T-cell (primary cell): ENCODE measurements at regions of chr3 and their contacts with region 1.

Region 1: DNA sequence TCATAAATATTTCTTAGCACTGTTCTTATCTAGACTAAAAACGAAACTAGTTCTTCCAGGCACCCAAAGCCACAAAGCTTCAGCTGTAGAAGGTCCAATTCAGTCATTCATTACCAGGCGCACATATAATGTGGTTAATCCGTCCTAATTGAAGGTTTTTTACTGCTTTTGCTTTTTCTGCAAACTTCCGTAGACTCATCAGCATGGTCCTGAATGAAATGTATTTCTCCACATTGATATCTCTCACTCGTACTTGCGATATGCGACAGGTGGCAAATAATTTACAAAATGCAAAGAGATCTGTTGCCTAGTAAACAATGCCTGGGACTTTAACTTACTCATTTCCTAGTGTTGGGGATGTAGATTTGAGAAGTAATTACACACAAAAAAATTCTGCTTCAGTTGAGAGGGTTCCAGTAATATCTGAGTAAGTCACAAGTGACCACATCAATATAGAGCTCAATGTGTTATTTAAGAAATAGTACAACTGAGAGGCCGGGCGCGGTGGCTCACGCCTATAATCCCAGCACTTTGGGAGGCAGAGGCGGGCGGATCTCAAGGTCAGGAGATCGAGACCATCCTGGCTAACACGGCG is 75.0 kb upstream of the MBNL1 start:
- DNase-seq: peak in 12 of 35 experiments; percentile 11 to 74 (median 30)
- ATAC-seq: peak; percentile 62 to 70 (median 66)
- H3K4me3 ChIP-seq: peak overlapping the region; percentile 42 to 66
- H3K4me3 Mint-ChIP-seq: peak overlapping the region; percentile 71 to 83 (median 79)
- H3K27ac ChIP-seq: peak overlapping the region; percentile 70
- H3K27ac Mint-ChIP-seq: peak overlapping the region; percentile 90 to 98
- H3K4me1 ChIP-seq: peaks cover 33 to 41% of the 10 kb centered on the region in 2 experiments
- H3K4me1 Mint-ChIP-seq: peaks cover 81 to 91% (median 85%) of the 10 kb centered on the region in 3 donors
- H3K27me3 ChIP-seq: no peaks in the 10 kb centered on the region
- H3K27me3 Mint-ChIP-seq: no peaks in the 10 kb centered on the region

Region 2: GRCh38 chr3:151863611-151864010 is 330.2 kb before region 1 on chr3:
- CTCF ChIA-PET with region 1: no interaction called
- POLR2A ChIA-PET with region 1: no interaction called
- DNase-seq: no peak
- ATAC-seq: no peak
- H3K4me3 ChIP-seq: no peak overlapping the region
- H3K4me3 Mint-ChIP-seq: no peak overlapping the region
- H3K27ac ChIP-seq: no peak overlapping the region
- H3K27ac Mint-ChIP-seq: no peak overlapping the region
- H3K4me1 ChIP-seq: no peaks in the 10 kb centered on the region
- H3K4me1 Mint-ChIP-seq: no peaks in the 10 kb centered on the region
- H3K27me3 ChIP-seq: no peaks in the 10 kb centered on the region
- H3K27me3 Mint-ChIP-seq: no peaks in the 10 kb centered on the region

Region 3: GRCh38 chr3:151903501-151903991 is 290.2 kb before region 1 on chr3:
- CTCF ChIA-PET with region 1: no interaction called
- POLR2A ChIA-PET with region 1: no interaction called
- DNase-seq: no peak
- ATAC-seq: no peak
- H3K4me3 ChIP-seq: no peak overlapping the region
- H3K4me3 Mint-ChIP-seq: no peak overlapping the region
- H3K27ac ChIP-seq: no peak overlapping the region
- H3K27ac Mint-ChIP-seq: no peak overlapping the region
- H3K4me1 ChIP-seq: no peaks in the 10 kb centered on the region
- H3K4me1 Mint-ChIP-seq: peaks cover 17 to 23% (median 20%) of the 10 kb centered on the region in 3 donors
- H3K27me3 ChIP-seq: no peaks in the 10 kb centered on the region
- H3K27me3 Mint-ChIP-seq: peaks cover 0 to 5% of the 10 kb centered on the region in 2 donors

Region 4: DNA sequence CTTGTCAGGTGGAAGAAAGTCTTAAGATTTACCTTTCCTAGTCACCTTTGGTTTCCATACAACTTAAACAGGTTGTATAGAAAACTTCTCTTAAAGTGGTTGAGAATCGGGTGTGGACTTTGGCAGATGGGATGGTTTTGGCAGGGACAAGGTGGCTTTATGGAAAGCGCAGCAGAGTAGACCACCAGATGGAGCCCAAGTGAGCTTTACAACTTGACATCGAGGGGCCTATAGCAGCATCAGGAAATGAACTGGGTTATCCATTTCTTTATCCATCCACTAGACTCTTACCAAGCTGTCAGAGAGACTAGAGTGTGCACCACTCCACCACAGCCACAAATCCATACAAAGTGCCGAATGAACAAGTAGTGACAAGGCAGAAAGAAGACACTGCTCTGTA is 10.3 kb before region 1 on chr3:
- CTCF ChIA-PET with region 1: interaction called in 1 of 2 experiments, 12 read pairs
- POLR2A ChIA-PET with region 1: interaction called in 1 of 2 experiments, 3 read pairs
- DNase-seq: peak in 34 of 35 experiments; percentile 3 to 79 (median 46)
- ATAC-seq: peak; percentile 76 to 87 (median 81)
- H3K4me3 ChIP-seq: no peak overlapping the region
- H3K4me3 Mint-ChIP-seq: peak overlapping the region in 2 of 3 donors; percentile 22 to 32
- H3K27ac ChIP-seq: peak overlapping the region; percentile 7
- H3K27ac Mint-ChIP-seq: peak overlapping the region; percentile 59 to 80
- H3K4me1 ChIP-seq: peaks cover 4% of the 10 kb centered on the region in 2 experiments
- H3K4me1 Mint-ChIP-seq: peaks cover 64 to 75% (median 69%) of the 10 kb centered on the region in 3 donors
- H3K27me3 ChIP-seq: no peaks in the 10 kb centered on the region
- H3K27me3 Mint-ChIP-seq: no peaks in the 10 kb centered on the region

Region 5: GRCh38 chr3:152205097-152205593 is 11.4 kb after region 1 on chr3:
- CTCF ChIA-PET with region 1: interaction called in 1 of 2 experiments, 4 read pairs
- POLR2A ChIA-PET with region 1: interaction called, 3 to 10 read pairs
- DNase-seq: peak in 2 of 35 experiments; percentile 29 to 56
- ATAC-seq: peak; percentile 36 to 63 (median 54)
- H3K4me3 ChIP-seq: peak overlapping the region; percentile 2 to 50
- H3K4me3 Mint-ChIP-seq: peak overlapping the region; percentile 83 to 95 (median 83)
- H3K27ac ChIP-seq: peak overlapping the region; percentile 78
- H3K27ac Mint-ChIP-seq: peak overlapping the region; percentile 97 to 100
- H3K4me1 ChIP-seq: peaks cover 12 to 51% of the 10 kb centered on the region in 2 experiments
- H3K4me1 Mint-ChIP-seq: peaks cover 76 to 84% (median 76%) of the 10 kb centered on the region in 3 donors
- H3K27me3 ChIP-seq: no peaks in the 10 kb centered on the region
- H3K27me3 Mint-ChIP-seq: no peaks in the 10 kb centered on the region

Region 6: GRCh38 chr3:152258448-152259393 is 65.0 kb after region 1 on chr3:
- CTCF ChIA-PET with region 1: interaction called in 1 of 2 experiments, 14 read pairs
- POLR2A ChIA-PET with region 1: interaction called, 5 to 7 read pairs
- DNase-seq: peak in 31 of 35 experiments; percentile 22 to 73 (median 50)
- ATAC-seq: peak; percentile 46 to 76 (median 53)
- H3K4me3 ChIP-seq: peak overlapping the region; percentile 16 to 29
- H3K4me3 Mint-ChIP-seq: peak overlapping the region; percentile 63 to 72 (median 64)
- H3K27ac ChIP-seq: peak overlapping the region; percentile 94
- H3K27ac Mint-ChIP-seq: peak overlapping the region; percentile 97
- H3K4me1 ChIP-seq: peaks cover 53 to 72% of the 10 kb centered on the region in 2 experiments
- H3K4me1 Mint-ChIP-seq: peaks cover 87 to 92% (median 90%) of the 10 kb centered on the region in 3 donors
- H3K27me3 ChIP-seq: no peaks in the 10 kb centered on the region
- H3K27me3 Mint-ChIP-seq: no peaks in the 10 kb centered on the region